Caco-2 (cell line): ENCODE measurements at regions of chr14 and their contacts with region 1.

Region 1: DNA sequence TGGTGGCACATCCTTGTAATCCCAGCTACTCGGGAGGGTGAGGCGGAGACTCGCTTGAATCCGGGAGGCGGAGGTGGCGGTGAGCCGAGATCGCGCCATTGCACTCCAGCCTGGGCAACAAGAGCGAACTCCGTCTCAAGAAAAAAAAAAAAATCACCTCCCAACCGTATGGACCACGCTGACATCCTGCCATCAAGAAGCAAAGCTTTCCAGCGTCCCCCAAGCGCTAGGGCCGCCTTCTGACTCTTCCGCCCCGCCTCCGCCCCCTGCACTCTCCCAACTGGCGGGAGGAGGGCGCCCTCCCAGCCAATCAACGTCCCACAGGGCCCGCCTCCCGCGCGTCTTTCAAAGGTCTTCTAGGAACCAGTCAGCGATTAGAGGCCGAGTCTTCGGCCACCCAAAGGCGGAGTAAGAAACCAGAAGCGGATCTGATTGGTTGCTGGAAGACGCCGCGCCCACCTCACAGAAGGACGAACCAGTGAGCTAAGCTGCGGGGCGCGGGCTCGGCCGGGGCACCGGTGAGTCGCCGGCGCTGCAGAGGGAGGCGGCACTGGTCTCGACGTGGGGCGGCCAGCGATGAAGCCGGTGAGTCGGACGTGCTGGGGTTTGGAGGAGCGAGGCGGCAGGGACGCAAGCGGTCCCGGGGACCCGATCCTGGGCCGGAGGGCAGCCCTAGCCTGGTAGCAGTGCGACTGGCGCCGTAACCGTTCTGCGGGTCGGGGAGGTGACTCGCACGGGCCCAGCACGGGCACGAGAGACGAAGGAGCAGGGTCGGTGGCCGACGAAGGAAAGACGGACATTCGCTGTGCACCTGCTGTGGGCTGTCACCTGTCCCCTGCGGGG is at the start of gene CDKN3:
- DNase-seq: peak; percentile 98 to 99
- H3K4me3 ChIP-seq: peak within 1 kb of the TSS; percentile 72
- H3K4me3 Mint-ChIP-seq: peak within 1 kb of the TSS; percentile 82
- H3K27ac Mint-ChIP-seq: peak within 1 kb of the TSS; percentile 83
- H3K4me1 ChIP-seq: peaks cover 9% of the 10 kb centered on the region
- H3K4me1 Mint-ChIP-seq: peaks cover 15% of the 10 kb centered on the region
- H3K27me3 ChIP-seq: no peaks in the 10 kb centered on the region
- H3K27me3 Mint-ChIP-seq: no peaks in the 10 kb centered on the region
- CTCF ChIP-seq: peak; percentile 45 to 59
- total RNA-seq, gene CDKN3: 64.9 and 83.0 TPM in 2 replicates

Region 2: GRCh38 chr14:54166049-54166950 is 230.4 kb before region 1 on chr14:
- CTCF ChIA-PET with region 1: no interaction called
- POLR2A ChIA-PET with region 1: no interaction called
- intact Hi-C with region 1: no loop called
- DNase-seq: no peak
- H3K4me3 ChIP-seq: no peak overlapping the region
- H3K4me3 Mint-ChIP-seq: no peak overlapping the region
- H3K27ac Mint-ChIP-seq: no peak overlapping the region
- H3K4me1 ChIP-seq: peaks cover 5% of the 10 kb centered on the region; the same call in 1 of the 2 replicates
- H3K4me1 Mint-ChIP-seq: no peaks in the 10 kb centered on the region
- H3K27me3 ChIP-seq: no peaks in the 10 kb centered on the region
- H3K27me3 Mint-ChIP-seq: no peaks in the 10 kb centered on the region
- CTCF ChIP-seq: no peak

Region 3: DNA sequence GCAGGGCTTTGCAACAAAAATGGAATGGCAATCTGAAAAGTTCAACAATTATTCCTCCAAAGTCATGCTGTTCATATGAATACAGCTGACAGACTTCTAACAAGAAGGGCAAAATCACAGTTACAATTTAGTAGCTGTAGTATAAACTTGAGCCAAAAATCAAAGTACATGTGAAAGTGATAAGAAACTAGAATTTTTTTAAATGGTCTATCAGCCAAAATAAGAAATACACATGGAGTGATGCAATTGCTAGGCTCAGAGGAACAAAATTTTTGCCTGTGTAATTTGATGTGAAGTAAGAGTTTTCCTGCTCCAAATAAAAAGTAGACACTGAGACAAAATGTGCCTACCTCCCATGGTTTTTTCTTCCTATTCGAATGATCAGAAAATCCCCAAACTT is 167.6 kb before region 1 on chr14:
- CTCF ChIA-PET with region 1: no interaction called
- POLR2A ChIA-PET with region 1: no interaction called
- intact Hi-C with region 1: no loop called
- DNase-seq: no peak
- H3K4me3 ChIP-seq: no peak overlapping the region
- H3K4me3 Mint-ChIP-seq: no peak overlapping the region
- H3K27ac Mint-ChIP-seq: no peak overlapping the region
- H3K4me1 ChIP-seq: no peaks in the 10 kb centered on the region
- H3K4me1 Mint-ChIP-seq: peaks cover 7% of the 10 kb centered on the region
- H3K27me3 ChIP-seq: no peaks in the 10 kb centered on the region
- H3K27me3 Mint-ChIP-seq: no peaks in the 10 kb centered on the region
- CTCF ChIP-seq: no peak

Region 4: GRCh38 chr14:54420013-54420809 is 23.5 kb after region 1 on chr14:
- CTCF ChIA-PET with region 1: interaction called, 17 read pairs
- POLR2A ChIA-PET with region 1: no interaction called
- intact Hi-C with region 1: loop called (anchors 1 kb)
- DNase-seq: peak; percentile 59 to 66
- H3K4me3 ChIP-seq: no peak overlapping the region
- H3K4me3 Mint-ChIP-seq: no peak overlapping the region
- H3K27ac Mint-ChIP-seq: no peak overlapping the region
- H3K4me1 ChIP-seq: no peaks in the 10 kb centered on the region
- H3K4me1 Mint-ChIP-seq: peaks cover 9% of the 10 kb centered on the region
- H3K27me3 ChIP-seq: no peaks in the 10 kb centered on the region
- H3K27me3 Mint-ChIP-seq: no peaks in the 10 kb centered on the region
- CTCF ChIP-seq: peak; percentile 48 to 67

Region 5: DNA sequence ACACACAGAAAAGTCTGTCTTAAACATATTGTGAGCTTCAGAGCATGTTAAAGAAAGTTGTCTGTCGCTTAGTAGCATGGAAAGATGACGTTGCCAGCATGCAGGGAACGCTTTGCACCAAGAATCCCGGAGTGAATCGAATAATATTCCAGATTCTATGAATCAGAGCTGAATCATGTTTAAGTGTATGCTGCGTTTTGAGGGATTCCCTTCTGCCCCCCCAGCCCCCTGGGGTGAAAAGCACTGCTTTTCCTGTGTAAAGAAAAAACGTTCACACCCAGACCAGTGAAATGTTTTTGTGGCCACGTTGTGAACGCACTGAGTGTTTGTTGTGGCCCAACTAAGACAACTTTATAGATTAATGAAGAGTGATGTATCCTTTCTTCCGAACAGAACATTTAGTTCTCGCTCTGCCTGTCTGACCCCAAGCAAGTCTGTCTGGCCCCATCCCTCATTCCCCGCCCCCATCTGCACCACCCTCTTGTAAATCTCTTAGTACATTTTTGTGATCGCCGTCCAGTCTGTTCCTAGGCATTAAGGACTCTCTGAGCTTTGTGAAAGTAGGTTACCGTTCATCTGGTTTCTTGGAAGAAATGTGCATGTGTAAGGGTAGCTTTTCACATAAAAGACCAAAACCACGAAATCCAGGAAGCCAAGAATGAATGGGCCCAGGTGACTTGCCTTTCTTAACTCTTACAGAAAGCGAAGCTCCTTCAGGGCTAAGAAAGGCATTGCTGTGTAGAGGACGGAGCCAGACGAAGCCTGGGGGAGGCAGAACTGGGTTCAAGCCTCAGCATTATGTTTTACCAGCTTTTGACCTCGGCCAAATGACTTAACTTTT is 273.2 kb after region 1 on chr14:
- CTCF ChIA-PET with region 1: no interaction called
- POLR2A ChIA-PET with region 1: no interaction called
- intact Hi-C with region 1: no loop called
- DNase-seq: no peak
- H3K4me3 ChIP-seq: no peak overlapping the region
- H3K4me3 Mint-ChIP-seq: no peak overlapping the region
- H3K27ac Mint-ChIP-seq: no peak overlapping the region
- H3K4me1 ChIP-seq: peaks cover 25% of the 10 kb centered on the region
- H3K4me1 Mint-ChIP-seq: peaks cover 36% of the 10 kb centered on the region
- H3K27me3 ChIP-seq: no peaks in the 10 kb centered on the region
- H3K27me3 Mint-ChIP-seq: no peaks in the 10 kb centered on the region
- CTCF ChIP-seq: no peak